ENCODE measurements at regions of chr9 and their contacts with region 1.

Region 1: GRCh38 chr9:121059998-121060636 is 10.0 kb upstream of the C5 start:
- DNase-seq: peak in 7 of 14 experiments; percentile 9 to 76 (median 59)
- ATAC-seq: no peak
- H3K4me3 ChIP-seq: no peak overlapping the region
- H3K4me3 Mint-ChIP-seq: no peak overlapping the region
- H3K27ac ChIP-seq: no peak overlapping the region
- H3K27ac Mint-ChIP-seq: no peak overlapping the region
- H3K4me1 ChIP-seq: peaks cover 5% of the 10 kb centered on the region
- H3K4me1 Mint-ChIP-seq: peaks cover 18% of the 10 kb centered on the region
- H3K27me3 ChIP-seq: no peaks in the 10 kb centered on the region
- H3K27me3 Mint-ChIP-seq: no peaks in the 10 kb centered on the region
- CTCF ChIP-seq: peak; percentile 77

Region 2: DNA sequence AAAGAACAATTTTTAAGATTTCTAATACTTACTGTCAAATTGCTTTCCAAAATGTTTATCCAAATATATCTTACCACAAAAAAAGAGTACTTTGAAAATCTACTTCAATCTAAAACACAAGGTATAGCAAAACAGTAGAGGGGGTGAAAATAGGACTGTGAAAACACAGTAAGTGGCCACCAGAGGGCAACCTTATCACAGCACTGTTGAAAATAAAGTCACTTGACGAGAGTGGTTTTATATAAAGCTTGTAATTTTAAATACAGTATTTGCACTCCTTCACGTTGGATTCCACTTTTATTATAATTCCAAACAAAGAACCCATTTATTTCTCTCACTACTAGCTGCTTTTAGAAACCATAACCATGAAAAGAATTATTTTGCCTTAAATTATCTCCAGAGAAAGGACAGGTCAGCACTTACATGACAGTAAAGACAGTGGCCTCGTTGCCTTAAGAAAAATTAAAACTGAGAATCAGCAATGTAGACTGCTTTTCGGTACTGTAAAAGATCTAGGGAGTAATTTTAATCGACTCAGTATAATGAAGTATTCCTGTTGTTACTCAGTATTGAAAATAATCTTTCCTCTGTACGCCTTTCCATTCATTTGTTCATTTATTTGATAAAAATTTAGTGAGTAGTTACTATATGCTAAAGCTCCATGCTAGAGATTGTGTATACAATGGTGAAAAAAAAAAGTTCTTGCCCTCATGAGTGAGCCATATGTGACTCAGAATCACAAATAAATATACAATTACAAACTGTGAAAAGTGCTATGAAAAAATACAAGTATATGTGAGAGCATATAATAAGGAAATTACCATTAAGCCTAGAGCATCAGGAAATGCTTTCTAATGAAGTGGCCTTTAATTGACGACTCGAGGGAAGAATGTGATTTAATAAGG is 440.1 kb before region 1 on chr9:
- CTCF ChIA-PET with region 1: no interaction called
- POLR2A ChIA-PET with region 1: no interaction called
- intact Hi-C with region 1: loop called in 1 of 2 experiments (anchors 5 kb)
- DNase-seq: peak; percentile 26 to 77 (median 41)
- ATAC-seq: peak; percentile 94
- H3K4me3 ChIP-seq: no peak overlapping the region
- H3K4me3 Mint-ChIP-seq: no peak overlapping the region
- H3K27ac ChIP-seq: no peak overlapping the region
- H3K27ac Mint-ChIP-seq: no peak overlapping the region
- H3K4me1 ChIP-seq: no peaks in the 10 kb centered on the region
- H3K4me1 Mint-ChIP-seq: peaks cover 4% of the 10 kb centered on the region
- H3K27me3 ChIP-seq: no peaks in the 10 kb centered on the region
- H3K27me3 Mint-ChIP-seq: no peaks in the 10 kb centered on the region
- CTCF ChIP-seq: peak; percentile 86

Region 3: DNA sequence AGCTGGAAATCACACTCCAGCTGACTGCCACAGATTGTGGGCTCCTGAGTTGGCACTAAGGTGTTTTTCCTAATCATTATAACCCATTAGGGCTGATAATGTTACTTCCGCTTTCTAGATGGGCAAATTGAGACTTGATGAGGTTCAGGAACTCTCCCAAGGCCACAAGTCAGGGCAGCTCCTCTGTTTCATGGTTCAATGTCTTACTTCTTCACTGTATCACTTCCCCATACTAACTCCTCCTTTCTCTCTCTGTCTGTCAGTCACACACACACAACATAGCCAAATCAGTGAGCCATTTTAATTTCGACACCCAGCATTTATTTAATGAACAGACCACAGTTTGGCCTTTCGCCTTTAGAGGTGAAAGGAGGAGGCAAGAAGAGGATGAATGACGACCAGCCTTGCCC is 115.7 kb before region 1 on chr9:
- CTCF ChIA-PET with region 1: no interaction called
- POLR2A ChIA-PET with region 1: no interaction called
- intact Hi-C with region 1: loop called in 1 of 2 experiments (anchors 10 kb)
- DNase-seq: peak in 1 of 14 experiments; percentile 28
- ATAC-seq: no peak
- H3K4me3 ChIP-seq: no peak overlapping the region
- H3K4me3 Mint-ChIP-seq: no peak overlapping the region
- H3K27ac ChIP-seq: no peak overlapping the region
- H3K27ac Mint-ChIP-seq: no peak overlapping the region
- H3K4me1 ChIP-seq: no peaks in the 10 kb centered on the region
- H3K4me1 Mint-ChIP-seq: no peaks in the 10 kb centered on the region
- H3K27me3 ChIP-seq: no peaks in the 10 kb centered on the region
- H3K27me3 Mint-ChIP-seq: no peaks in the 10 kb centered on the region
- CTCF ChIP-seq: no peak

Measured in CD4-positive, alpha-beta T cell (primary cell).